Naive thymus-derived CD4-positive, alpha-beta T cell (primary cell): ENCODE measurements at regions of chr2 and their contacts with region 1.

Region 1: GRCh38 chr2:204967199-204967960 is 422.1 kb downstream of the PARD3B start:
- DNase-seq: peak; percentile 10 to 86 (median 83)
- ATAC-seq: peak; percentile 78
- H3K4me3 ChIP-seq: peak overlapping the region; percentile 37
- H3K4me3 Mint-ChIP-seq: peak overlapping the region; percentile 51 to 89 (median 70)
- H3K27ac ChIP-seq: peak overlapping the region; percentile 58
- H3K27ac Mint-ChIP-seq: peak overlapping the region; percentile 91 to 100 (median 98)
- H3K4me1 ChIP-seq: peaks cover 26 to 67% of the 10 kb centered on the region in 2 donors
- H3K4me1 Mint-ChIP-seq: peaks cover 36 to 80% (median 70%) of the 10 kb centered on the region in 7 donors
- H3K27me3 ChIP-seq: no peaks in the 10 kb centered on the region
- H3K27me3 Mint-ChIP-seq: no peaks in the 10 kb centered on the region

Region 2: DNA sequence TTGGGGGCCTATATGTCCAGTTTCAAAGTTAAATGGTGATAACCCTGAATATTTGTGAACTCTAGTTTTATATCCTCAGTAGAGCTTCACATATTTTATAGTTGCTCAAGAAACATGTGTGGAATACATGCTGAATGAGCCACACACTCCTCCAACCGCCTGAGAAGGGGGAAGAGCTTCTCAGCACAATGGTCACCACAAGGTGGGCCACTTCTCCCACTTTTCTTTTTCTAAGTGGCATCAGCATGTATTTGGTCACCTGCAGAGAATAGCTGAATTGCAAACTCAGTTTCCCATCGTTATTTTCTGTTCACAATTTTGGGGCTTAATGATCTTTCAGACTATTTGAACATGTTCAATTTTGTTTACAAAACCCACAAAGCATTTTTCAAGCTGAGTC is 81.6 kb before region 1 on chr2:
- CTCF ChIA-PET with region 1: interaction called, 4 read pairs
- POLR2A ChIA-PET with region 1: interaction called, 21 read pairs
- intact Hi-C with region 1: loop called in 1 of 2 experiments (anchors 5 kb)
- DNase-seq: no peak
- ATAC-seq: no peak
- H3K4me3 ChIP-seq: no peak overlapping the region
- H3K4me3 Mint-ChIP-seq: no peak overlapping the region
- H3K27ac ChIP-seq: no peak overlapping the region
- H3K27ac Mint-ChIP-seq: peak overlapping the region in 2 of 9 donors; percentile 6 to 51
- H3K4me1 ChIP-seq: peaks cover 0 to 14% of the 10 kb centered on the region in 2 donors
- H3K4me1 Mint-ChIP-seq: peaks cover 13 to 33% (median 26%) of the 10 kb centered on the region in 7 donors
- H3K27me3 ChIP-seq: no peaks in the 10 kb centered on the region
- H3K27me3 Mint-ChIP-seq: no peaks in the 10 kb centered on the region

Region 3: GRCh38 chr2:204931562-204931961 is 35.8 kb before region 1 on chr2:
- CTCF ChIA-PET with region 1: no interaction called
- POLR2A ChIA-PET with region 1: interaction called, 4 read pairs
- intact Hi-C with region 1: loop called in 1 of 2 experiments (anchors 5 kb)
- DNase-seq: no peak
- ATAC-seq: no peak
- H3K4me3 ChIP-seq: no peak overlapping the region
- H3K4me3 Mint-ChIP-seq: no peak overlapping the region
- H3K27ac ChIP-seq: no peak overlapping the region
- H3K27ac Mint-ChIP-seq: no peak overlapping the region
- H3K4me1 ChIP-seq: no peaks in the 10 kb centered on the region
- H3K4me1 Mint-ChIP-seq: peaks cover 3 to 29% (median 21%) of the 10 kb centered on the region in 7 donors
- H3K27me3 ChIP-seq: no peaks in the 10 kb centered on the region
- H3K27me3 Mint-ChIP-seq: peaks cover 0 to 5% (median 0%) of the 10 kb centered on the region in 5 donors

Region 4: DNA sequence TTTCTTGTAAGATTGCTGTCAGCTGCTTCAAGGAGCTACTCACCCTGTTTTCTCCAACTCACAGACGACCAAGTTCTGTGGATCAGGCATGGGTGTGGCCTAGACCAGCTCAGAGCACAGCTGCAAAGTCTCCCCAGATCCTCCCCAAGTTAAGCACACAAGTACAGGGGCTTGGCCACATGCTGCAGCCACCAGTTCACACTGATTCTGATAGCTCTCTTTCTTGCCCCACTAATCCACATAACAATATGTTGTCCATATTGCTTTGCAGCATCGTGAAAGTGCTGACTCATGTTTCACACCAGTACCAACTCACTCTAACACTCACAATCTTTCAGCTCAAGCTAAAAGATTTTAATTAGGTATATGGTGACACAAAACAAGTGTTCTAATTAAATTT is 14.9 kb after region 1 on chr2:
- CTCF ChIA-PET with region 1: interaction called, 4 read pairs
- POLR2A ChIA-PET with region 1: interaction called, 13 read pairs
- intact Hi-C with region 1: loop called in 1 of 2 experiments (anchors 1 kb)
- DNase-seq: no peak
- ATAC-seq: peak; percentile 24
- H3K4me3 ChIP-seq: no peak overlapping the region
- H3K4me3 Mint-ChIP-seq: peak overlapping the region in 4 of 10 donors; percentile 11 to 66 (median 24)
- H3K27ac ChIP-seq: no peak overlapping the region
- H3K27ac Mint-ChIP-seq: peak overlapping the region in 7 of 9 donors; percentile 15 to 70 (median 65)
- H3K4me1 ChIP-seq: peaks cover 0 to 10% of the 10 kb centered on the region in 2 donors
- H3K4me1 Mint-ChIP-seq: peaks cover 5 to 43% (median 27%) of the 10 kb centered on the region in 7 donors
- H3K27me3 ChIP-seq: no peaks in the 10 kb centered on the region
- H3K27me3 Mint-ChIP-seq: no peaks in the 10 kb centered on the region

Region 5: DNA sequence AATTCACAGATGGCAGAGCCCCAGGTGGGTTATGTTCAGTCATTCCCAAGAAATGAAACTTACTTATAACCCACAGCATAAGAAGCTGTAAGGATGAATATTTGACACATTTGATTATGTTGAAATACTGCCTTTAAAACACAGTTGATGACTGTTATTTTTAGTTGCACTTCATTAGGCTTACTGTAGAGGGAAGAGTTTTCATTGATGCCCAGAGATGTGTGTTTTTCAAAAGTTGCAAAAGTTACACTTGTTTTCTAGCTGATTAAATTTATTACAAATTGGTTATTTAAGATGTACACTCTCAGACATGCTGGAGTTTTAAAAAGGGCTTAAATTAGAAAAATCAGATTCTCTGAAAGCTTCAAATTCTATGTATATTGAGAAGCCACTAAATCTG is 84.0 kb after region 1 on chr2:
- CTCF ChIA-PET with region 1: interaction called, 6 read pairs
- POLR2A ChIA-PET with region 1: no interaction called
- intact Hi-C with region 1: loop called in 1 of 2 experiments (anchors 5 kb)
- DNase-seq: peak in 4 of 9 donors; percentile 18 to 21 (median 19)
- ATAC-seq: no peak
- H3K4me3 ChIP-seq: no peak overlapping the region
- H3K4me3 Mint-ChIP-seq: no peak overlapping the region
- H3K27ac ChIP-seq: no peak overlapping the region
- H3K27ac Mint-ChIP-seq: no peak overlapping the region
- H3K4me1 ChIP-seq: no peaks in the 10 kb centered on the region
- H3K4me1 Mint-ChIP-seq: peaks cover 2 to 41% (median 32%) of the 10 kb centered on the region in 7 donors
- H3K27me3 ChIP-seq: no peaks in the 10 kb centered on the region
- H3K27me3 Mint-ChIP-seq: no peaks in the 10 kb centered on the region

Region 6: GRCh38 chr2:205133544-205133943 is 166.2 kb after region 1 on chr2:
- CTCF ChIA-PET with region 1: interaction called, 9 read pairs
- POLR2A ChIA-PET with region 1: interaction called, 8 read pairs
- intact Hi-C with region 1: loop called in 1 of 2 experiments (anchors 1 kb)
- DNase-seq: no peak
- ATAC-seq: no peak
- H3K4me3 ChIP-seq: no peak overlapping the region
- H3K4me3 Mint-ChIP-seq: no peak overlapping the region
- H3K27ac ChIP-seq: no peak overlapping the region
- H3K27ac Mint-ChIP-seq: no peak overlapping the region
- H3K4me1 ChIP-seq: peaks cover 0 to 16% of the 10 kb centered on the region in 2 donors
- H3K4me1 Mint-ChIP-seq: peaks cover 13 to 31% (median 23%) of the 10 kb centered on the region in 7 donors
- H3K27me3 ChIP-seq: no peaks in the 10 kb centered on the region
- H3K27me3 Mint-ChIP-seq: no peaks in the 10 kb centered on the region